ENCODE measurements at regions of chrX and their contacts with region 1.

Region 1: DNA sequence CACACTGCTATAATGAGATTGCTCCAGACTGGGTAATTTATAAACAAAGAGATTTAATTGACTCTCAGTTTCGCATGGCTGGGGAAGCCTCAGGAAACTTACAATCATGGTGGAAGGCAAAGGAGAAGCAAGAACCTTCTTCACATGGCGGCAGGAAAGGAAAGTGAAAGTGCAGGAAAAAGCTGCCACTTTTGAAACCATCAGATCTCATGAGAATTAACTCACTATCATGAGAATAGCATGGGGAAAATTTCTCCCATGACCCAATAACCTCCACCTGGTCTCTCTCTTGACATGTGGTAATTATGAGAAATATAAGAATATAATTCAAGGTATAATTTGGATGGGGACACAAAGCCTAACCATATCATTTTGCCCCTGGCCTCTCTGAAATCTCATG is 884.2 kb downstream of the GLUD2 start:
- DNase-seq: no peak
- H3K4me3 ChIP-seq: no peak overlapping the region
- H3K27ac ChIP-seq: no peak overlapping the region
- H3K4me1 ChIP-seq: no peaks in the 10 kb centered on the region
- H3K27me3 ChIP-seq: no peaks in the 10 kb centered on the region
- CTCF ChIP-seq: no peak

Region 2: DNA sequence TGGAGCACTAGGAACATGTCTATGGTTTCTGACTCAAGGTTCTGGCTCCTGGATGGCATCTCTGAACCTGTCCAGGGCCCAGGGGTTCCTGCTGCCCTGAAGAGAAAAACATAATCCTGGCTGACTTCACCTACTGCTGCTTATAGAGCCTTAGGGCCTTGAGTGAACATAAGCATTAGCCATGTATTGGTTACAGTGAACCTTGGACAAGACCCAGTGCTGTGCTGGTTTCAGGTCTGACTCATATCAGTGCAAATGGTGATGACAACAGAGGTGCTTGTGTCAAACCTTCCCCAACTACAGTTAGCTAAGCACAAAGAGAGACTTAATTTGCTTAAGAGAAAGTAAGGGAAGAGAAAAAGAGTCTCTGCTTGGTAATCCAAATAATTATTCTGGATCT is 163.0 kb after region 1 on chrX:
- CTCF ChIA-PET with region 1: no interaction called
- POLR2A ChIA-PET with region 1: interaction called, 11 read pairs
- intact Hi-C with region 1: no loop called
- DNase-seq: no peak
- H3K4me3 ChIP-seq: no peak overlapping the region
- H3K27ac ChIP-seq: no peak overlapping the region
- H3K4me1 ChIP-seq: no peaks in the 10 kb centered on the region
- H3K27me3 ChIP-seq: no peaks in the 10 kb centered on the region
- CTCF ChIP-seq: no peak

Measured in PC-9 (cell line).